Caco-2 (cell line): ENCODE measurements at regions of chr6 and their contacts with region 1.

Region 1: DNA sequence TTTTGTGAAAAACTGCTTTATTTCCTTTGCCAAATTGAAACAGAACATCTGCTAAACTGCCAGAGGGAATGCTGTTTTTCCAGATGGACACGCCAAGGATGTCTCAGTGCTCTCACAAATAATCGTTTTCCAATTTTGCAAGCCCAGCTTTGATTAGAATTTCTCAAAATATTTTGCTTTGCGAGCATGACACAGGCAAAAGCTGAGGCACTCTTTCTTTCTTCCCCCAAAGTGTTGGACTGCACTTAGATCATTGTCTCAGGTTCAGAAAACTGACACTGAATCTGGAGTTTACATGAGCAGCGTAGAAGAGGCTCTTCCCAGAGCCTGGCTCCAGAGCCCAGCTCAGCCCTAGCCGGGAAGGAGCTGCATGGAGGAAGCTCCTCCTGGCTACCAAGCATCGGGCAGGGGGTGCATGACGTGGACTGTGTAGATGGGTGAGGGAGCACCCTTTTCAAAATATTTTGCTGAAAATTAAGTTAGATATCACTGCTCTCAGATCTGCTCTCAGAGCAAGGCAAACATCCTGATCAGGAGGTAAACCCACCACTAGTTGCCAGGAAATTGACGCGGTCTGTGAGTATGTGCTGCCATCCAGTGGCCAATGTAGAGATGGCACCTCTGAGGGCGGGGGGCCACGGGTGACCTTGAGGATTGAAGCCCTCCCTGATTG is 107.5 kb downstream of the SLC22A3 start:
- DNase-seq: peak; percentile 45 to 78
- H3K4me3 ChIP-seq: no peak overlapping the region
- H3K4me3 Mint-ChIP-seq: no peak overlapping the region
- H3K27ac Mint-ChIP-seq: no peak overlapping the region
- H3K4me1 ChIP-seq: no peaks in the 10 kb centered on the region
- H3K4me1 Mint-ChIP-seq: no peaks in the 10 kb centered on the region
- H3K27me3 ChIP-seq: no peaks in the 10 kb centered on the region
- H3K27me3 Mint-ChIP-seq: peaks cover 2% of the 10 kb centered on the region
- CTCF ChIP-seq: peak; percentile 86 to 96

Region 2: DNA sequence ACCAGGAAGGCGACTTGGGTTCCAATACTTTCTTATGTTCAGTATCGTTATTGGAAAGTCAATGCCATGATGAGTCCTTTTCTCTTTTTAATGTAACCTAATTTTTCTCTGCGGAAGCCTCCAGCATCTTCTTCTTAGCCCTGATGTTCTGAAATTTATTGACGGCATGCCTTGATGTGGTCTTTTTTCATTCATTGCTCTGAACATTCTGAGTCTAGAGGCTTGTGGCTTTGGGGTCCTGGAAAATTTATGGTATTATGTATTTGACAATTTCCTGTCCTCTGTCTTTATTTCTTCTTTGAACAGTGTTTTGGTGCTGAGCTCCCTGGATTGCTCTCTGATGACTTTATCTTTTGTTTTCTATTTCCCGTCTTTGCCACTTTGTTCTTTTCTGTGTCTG is 593.6 kb before region 1 on chr6:
- CTCF ChIA-PET with region 1: interaction called, 5 read pairs
- POLR2A ChIA-PET with region 1: no interaction called
- intact Hi-C with region 1: loop called (anchors 1 kb)
- DNase-seq: no peak
- H3K4me3 ChIP-seq: no peak overlapping the region
- H3K4me3 Mint-ChIP-seq: no peak overlapping the region
- H3K27ac Mint-ChIP-seq: no peak overlapping the region
- H3K4me1 ChIP-seq: no peaks in the 10 kb centered on the region
- H3K4me1 Mint-ChIP-seq: no peaks in the 10 kb centered on the region
- H3K27me3 ChIP-seq: no peaks in the 10 kb centered on the region
- H3K27me3 Mint-ChIP-seq: peaks cover 13% of the 10 kb centered on the region
- CTCF ChIP-seq: no peak

Region 3: DNA sequence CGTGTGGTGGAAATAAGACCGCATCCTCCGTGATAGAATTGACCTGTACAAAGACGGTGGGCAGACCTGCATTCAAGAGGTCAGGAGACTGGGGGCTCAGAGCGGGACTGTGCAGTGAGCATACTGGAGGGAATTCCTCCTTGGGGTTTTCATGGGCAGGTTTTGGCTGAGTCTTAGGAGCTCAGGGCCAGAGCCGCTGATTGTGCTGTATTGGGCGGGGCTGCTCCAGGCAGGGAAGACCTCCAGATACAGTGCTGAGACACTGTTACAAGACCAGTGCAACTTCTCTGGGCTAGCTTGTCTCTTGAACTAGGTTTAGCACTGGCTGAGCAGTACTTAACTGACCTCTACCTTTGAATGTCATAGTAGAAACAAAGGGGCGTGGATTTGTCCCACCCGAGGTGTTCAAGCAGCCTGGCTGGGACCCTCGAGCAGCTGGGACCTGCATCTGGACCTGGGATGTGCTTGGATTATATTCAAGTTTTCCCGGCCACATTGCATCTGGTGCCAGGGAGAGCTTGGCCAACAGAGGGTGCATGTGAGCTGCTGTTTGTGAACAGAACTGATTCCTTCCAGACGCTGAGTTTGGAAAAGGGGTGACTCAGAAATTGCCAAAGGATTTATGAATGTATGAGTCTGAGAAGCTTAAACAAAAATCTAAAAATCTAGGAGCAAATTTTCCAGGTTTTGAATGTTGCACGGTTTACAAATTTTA is 367.5 kb before region 1 on chr6:
- CTCF ChIA-PET with region 1: interaction called, 10 read pairs
- POLR2A ChIA-PET with region 1: no interaction called
- intact Hi-C with region 1: loop called (anchors 1 kb)
- DNase-seq: peak in 1 of 2 experiments; percentile 47
- H3K4me3 ChIP-seq: no peak overlapping the region
- H3K4me3 Mint-ChIP-seq: no peak overlapping the region
- H3K27ac Mint-ChIP-seq: no peak overlapping the region
- H3K4me1 ChIP-seq: no peaks in the 10 kb centered on the region
- H3K4me1 Mint-ChIP-seq: no peaks in the 10 kb centered on the region
- H3K27me3 ChIP-seq: no peaks in the 10 kb centered on the region
- H3K27me3 Mint-ChIP-seq: no peaks in the 10 kb centered on the region
- CTCF ChIP-seq: peak; percentile 51 to 84

Region 4: GRCh38 chr6:160188773-160189172 is 266.9 kb before region 1 on chr6:
- CTCF ChIA-PET with region 1: no interaction called
- POLR2A ChIA-PET with region 1: no interaction called
- intact Hi-C with region 1: no loop called
- DNase-seq: no peak
- H3K4me3 ChIP-seq: no peak overlapping the region
- H3K4me3 Mint-ChIP-seq: no peak overlapping the region
- H3K27ac Mint-ChIP-seq: no peak overlapping the region
- H3K4me1 ChIP-seq: no peaks in the 10 kb centered on the region
- H3K4me1 Mint-ChIP-seq: peaks cover 6% of the 10 kb centered on the region
- H3K27me3 ChIP-seq: no peaks in the 10 kb centered on the region
- H3K27me3 Mint-ChIP-seq: no peaks in the 10 kb centered on the region
- CTCF ChIP-seq: no peak

Region 5: GRCh38 chr6:160221423-160221822 is 234.3 kb before region 1 on chr6:
- CTCF ChIA-PET with region 1: interaction called, 12 read pairs
- POLR2A ChIA-PET with region 1: no interaction called
- intact Hi-C with region 1: loop called (anchors 1 kb)
- DNase-seq: peak in 1 of 2 experiments; percentile 15
- H3K4me3 ChIP-seq: no peak overlapping the region
- H3K4me3 Mint-ChIP-seq: no peak overlapping the region
- H3K27ac Mint-ChIP-seq: no peak overlapping the region
- H3K4me1 ChIP-seq: no peaks in the 10 kb centered on the region
- H3K4me1 Mint-ChIP-seq: peaks cover 11% of the 10 kb centered on the region
- H3K27me3 ChIP-seq: no peaks in the 10 kb centered on the region
- H3K27me3 Mint-ChIP-seq: no peaks in the 10 kb centered on the region
- CTCF ChIP-seq: peak in 1 of 2 experiments; percentile 12

Region 6: DNA sequence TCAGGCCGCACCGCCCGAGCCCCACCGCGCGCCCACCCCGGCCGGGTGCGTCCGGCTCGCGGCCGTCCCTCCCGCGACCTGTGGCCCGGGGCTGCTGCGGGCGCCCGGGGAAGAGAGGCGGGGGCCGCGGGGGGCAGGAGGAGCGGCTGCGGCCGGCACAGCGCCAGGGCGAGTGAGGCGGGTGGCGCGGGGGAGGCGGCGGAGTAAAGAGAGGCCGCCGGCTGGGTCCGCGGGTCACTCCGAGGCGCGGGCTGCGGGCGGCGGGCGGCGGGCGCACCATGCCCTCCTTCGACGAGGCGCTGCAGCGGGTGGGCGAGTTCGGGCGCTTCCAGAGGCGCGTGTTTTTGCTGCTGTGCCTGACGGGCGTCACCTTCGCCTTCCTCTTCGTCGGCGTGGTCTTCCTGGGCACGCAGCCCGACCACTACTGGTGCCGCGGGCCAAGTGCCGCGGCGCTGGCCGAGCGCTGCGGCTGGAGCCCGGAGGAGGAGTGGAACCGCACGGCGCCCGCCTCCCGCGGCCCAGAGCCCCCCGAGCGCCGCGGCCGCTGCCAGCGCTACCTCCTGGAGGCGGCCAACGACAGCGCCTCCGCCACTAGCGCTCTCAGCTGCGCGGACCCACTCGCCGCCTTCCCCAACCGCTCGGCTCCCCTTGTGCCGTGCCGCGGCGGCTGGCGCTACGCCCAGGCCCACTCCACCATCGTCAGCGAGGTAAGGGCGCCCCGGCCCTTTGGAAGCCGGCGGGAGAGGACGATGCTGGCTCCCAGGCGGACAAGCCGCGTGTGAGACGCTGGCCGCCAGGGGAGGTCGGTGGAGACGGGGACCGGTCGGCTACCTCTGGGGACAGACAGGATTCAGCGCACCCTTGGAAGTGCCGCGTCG is 107.3 kb before region 1 on chr6 and contains the start of gene SLC22A3:
- CTCF ChIA-PET with region 1: no interaction called
- POLR2A ChIA-PET with region 1: no interaction called
- intact Hi-C with region 1: loop called (anchors 5 kb)
- DNase-seq: peak; percentile 52 to 70
- H3K4me3 ChIP-seq: peak within 1 kb of the TSS; percentile 57
- H3K4me3 Mint-ChIP-seq: peak within 1 kb of the TSS; percentile 88
- H3K27ac Mint-ChIP-seq: no peak within 1 kb of the TSS
- H3K4me1 ChIP-seq: peaks cover 4% of the 10 kb centered on the region; the same call in 1 of the 2 replicates
- H3K4me1 Mint-ChIP-seq: peaks cover 14% of the 10 kb centered on the region
- H3K27me3 ChIP-seq: no peaks in the 10 kb centered on the region
- H3K27me3 Mint-ChIP-seq: peaks cover 10% of the 10 kb centered on the region
- CTCF ChIP-seq: peak; percentile 18 to 43
- total RNA-seq, gene SLC22A3: 2.3 and 2.4 TPM in 2 replicates